Naive thymus-derived CD8-positive, alpha-beta T cell (primary cell): ENCODE measurements at regions of chr3 and their contacts with region 1.

Region 1: GRCh38 chr3:172106989-172107388 is 67.6 kb downstream of the FNDC3B start:
- DNase-seq: peak; percentile 11 to 90 (median 73)
- ATAC-seq: peak; percentile 79 to 82
- H3K4me3 Mint-ChIP-seq: peak overlapping the region; percentile 70 to 86 (median 84)
- H3K27ac Mint-ChIP-seq: peak overlapping the region; percentile 88 to 96 (median 93)
- H3K4me1 Mint-ChIP-seq: peaks cover 45 to 84% (median 82%) of the 10 kb centered on the region in 4 donors
- H3K27me3 Mint-ChIP-seq: peaks cover 0 to 2% (median 0%) of the 10 kb centered on the region in 5 donors

Region 2: GRCh38 chr3:171890398-171890797 is 216.6 kb before region 1 on chr3:
- POLR2A ChIA-PET with region 1: no interaction called
- DNase-seq: no peak
- ATAC-seq: no peak
- H3K4me3 Mint-ChIP-seq: no peak overlapping the region
- H3K27ac Mint-ChIP-seq: no peak overlapping the region
- H3K4me1 Mint-ChIP-seq: no peaks in the 10 kb centered on the region
- H3K27me3 Mint-ChIP-seq: peaks cover 0 to 18% (median 5%) of the 10 kb centered on the region in 5 donors

Region 3: DNA sequence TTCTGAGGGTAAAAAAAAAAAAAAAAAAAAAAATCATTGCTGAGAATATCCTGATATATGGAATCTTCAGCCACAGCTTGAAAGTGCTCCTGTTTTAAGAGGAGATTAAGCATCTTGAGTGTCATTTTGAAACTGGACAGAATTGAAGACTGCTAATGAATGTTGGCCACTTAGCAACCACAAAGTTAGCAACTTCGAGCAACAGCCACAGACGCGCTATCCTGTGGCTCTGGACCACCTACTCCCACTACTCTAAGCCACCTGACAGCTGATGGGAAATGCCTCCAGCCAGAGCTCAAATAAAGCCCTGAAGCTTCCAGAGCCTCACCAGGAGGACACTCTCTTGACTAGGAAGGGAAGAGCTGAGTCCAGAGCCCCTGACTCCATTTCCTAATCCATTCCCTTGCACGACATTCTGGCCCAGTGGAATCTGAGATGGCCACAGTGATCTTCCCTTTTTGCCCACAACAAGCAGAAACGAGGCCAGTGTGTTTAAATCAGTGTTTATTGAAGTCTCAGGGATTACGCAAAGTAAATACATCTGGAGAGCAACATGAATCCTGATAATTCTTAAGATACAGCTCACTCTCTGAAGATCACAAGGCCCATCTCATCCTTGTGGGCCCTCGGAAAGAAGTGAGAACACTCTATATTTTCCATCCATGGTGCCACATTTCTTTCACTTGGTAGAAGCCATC is 205.2 kb before region 1 on chr3:
- POLR2A ChIA-PET with region 1: no interaction called
- DNase-seq: no peak
- ATAC-seq: no peak
- H3K4me3 Mint-ChIP-seq: no peak overlapping the region
- H3K27ac Mint-ChIP-seq: no peak overlapping the region
- H3K4me1 Mint-ChIP-seq: no peaks in the 10 kb centered on the region
- H3K27me3 Mint-ChIP-seq: peaks cover 0 to 16% (median 10%) of the 10 kb centered on the region in 5 donors

Region 4: GRCh38 chr3:172039436-172040077 is 67.4 kb before region 1 on chr3 and contains the start of gene FNDC3B:
- POLR2A ChIA-PET with region 1: interaction called, 17 read pairs
- DNase-seq: peak; percentile 75 to 94 (median 90)
- ATAC-seq: peak; percentile 92 to 95
- H3K4me3 Mint-ChIP-seq: peak within 1 kb of the TSS; percentile 94 to 100 (median 99)
- H3K27ac Mint-ChIP-seq: peak within 1 kb of the TSS; percentile 92 to 98 (median 97)
- H3K4me1 Mint-ChIP-seq: peaks cover 8 to 55% (median 38%) of the 10 kb centered on the region in 4 donors
- H3K27me3 Mint-ChIP-seq: peaks cover 0 to 2% (median 0%) of the 10 kb centered on the region in 5 donors
- polyA plus RNA-seq, gene FNDC3B: 6.5 to 8.8 (median 8.6) TPM

Region 5: DNA sequence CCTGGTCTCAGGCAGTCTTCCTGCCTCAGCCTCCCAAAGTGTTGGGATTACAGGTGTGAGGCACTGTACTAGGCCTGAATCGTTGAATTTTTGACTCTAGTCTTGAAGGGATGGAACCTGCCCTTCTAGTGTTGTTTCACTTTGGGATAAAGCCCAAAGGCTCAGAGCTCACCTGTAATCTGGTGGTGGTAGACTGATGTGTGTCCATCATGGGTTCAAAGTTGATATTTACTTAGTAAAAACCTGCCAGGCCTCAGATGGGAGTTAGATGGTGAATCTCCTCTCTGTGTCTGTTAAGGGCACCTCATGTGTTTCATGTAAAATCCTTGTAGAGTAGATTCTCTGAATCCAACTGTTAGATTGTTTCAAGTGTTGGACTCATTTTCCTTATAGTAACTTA is 26.5 kb before region 1 on chr3:
- POLR2A ChIA-PET with region 1: no interaction called
- DNase-seq: no peak
- ATAC-seq: no peak
- H3K4me3 Mint-ChIP-seq: no peak overlapping the region
- H3K27ac Mint-ChIP-seq: no peak overlapping the region
- H3K4me1 Mint-ChIP-seq: peaks cover 6 to 19% (median 9%) of the 10 kb centered on the region in 4 donors
- H3K27me3 Mint-ChIP-seq: no peaks in the 10 kb centered on the region